Aorta (tissue), 5 donors: ENCODE measurements at regions of chr3 and their contacts with region 1.

Region 1: DNA sequence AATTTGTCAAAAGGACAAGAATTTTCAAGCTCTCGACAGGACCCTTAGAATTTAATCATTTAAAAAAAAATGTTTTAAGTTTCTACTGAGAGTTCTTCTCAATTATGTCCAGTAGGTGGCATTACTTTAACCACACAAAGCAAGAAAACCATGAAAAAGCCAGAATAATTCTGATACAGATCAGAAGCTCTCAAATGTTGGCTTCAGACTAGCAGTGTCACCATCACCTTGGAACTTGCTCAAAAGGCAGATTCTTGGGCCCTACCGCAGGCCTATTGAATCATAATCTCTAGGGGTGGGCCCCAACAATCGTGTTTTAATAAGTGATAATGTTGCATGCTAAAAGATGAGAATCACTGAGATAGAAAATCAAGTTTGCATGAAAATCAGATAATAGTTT is 99.5 kb upstream of the KCNMB2 start:
- DNase-seq: no peak
- ATAC-seq: no peak
- H3K4me3 ChIP-seq: no peak overlapping the region
- H3K27ac ChIP-seq: no peak overlapping the region
- H3K4me1 ChIP-seq: no peaks in the 10 kb centered on the region
- H3K27me3 ChIP-seq: no peaks in the 10 kb centered on the region

Region 2: GRCh38 chr3:178352326-178353005 is 84.3 kb before region 1 on chr3:
- intact Hi-C with region 1: no loop called
- DNase-seq: no peak
- ATAC-seq: peak; percentile 19
- H3K4me3 ChIP-seq: no peak overlapping the region
- H3K27ac ChIP-seq: no peak overlapping the region
- H3K4me1 ChIP-seq: no peaks in the 10 kb centered on the region
- H3K27me3 ChIP-seq: no peaks in the 10 kb centered on the region

Region 3: GRCh38 chr3:178947738-178948137 is 511.0 kb after region 1 on chr3:
- intact Hi-C with region 1: loop called in 1 of 2 experiments (anchors 5 kb)
- DNase-seq: no peak
- ATAC-seq: no peak
- H3K4me3 ChIP-seq: no peak overlapping the region
- H3K27ac ChIP-seq: no peak overlapping the region
- H3K4me1 ChIP-seq: no peaks in the 10 kb centered on the region
- H3K27me3 ChIP-seq: no peaks in the 10 kb centered on the region

Region 4: DNA sequence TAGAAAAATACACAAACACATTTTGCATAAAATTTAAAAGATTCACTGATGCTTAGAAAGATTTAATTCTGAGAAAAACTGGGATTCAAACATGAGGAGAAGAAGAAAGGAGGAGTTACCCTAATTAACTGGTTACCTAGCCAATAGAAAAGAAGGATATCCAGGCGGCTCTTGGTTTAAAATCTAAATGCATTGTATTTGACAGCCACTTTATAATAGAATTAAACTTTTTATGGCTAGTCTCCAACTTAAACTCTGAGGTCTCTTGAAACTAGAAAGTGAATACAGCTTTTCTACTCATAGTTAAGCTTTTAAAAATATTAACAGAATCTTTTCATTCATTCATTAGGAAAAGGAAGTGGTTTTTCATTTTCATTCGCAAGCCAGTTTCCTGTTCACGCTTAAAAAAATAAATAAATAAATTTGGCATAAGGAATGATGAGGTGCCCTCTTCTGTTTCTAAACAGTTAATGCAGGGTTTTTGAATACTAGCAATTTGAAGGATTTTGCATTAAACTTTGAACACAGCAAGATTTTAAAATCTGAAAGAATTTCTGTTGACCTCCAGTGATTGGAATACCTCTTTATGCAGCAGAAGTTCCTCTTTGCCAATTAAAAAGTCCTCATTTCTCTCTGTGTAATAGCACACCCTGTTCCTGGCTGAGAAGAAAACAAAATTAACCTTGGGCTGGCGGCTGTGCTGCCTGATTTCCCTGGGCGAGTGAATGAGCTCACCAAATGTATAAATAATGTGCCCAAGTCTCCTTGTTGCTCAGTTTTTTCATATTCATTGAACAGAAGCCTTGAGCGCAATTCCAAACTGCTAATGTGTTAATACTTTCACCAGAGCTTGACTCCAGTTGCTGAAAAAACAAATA is 529.8 kb after region 1 on chr3:
- intact Hi-C with region 1: loop called (anchors 2 kb)
- DNase-seq: no peak
- ATAC-seq: no peak
- H3K4me3 ChIP-seq: peak overlapping the region in 1 of 2 donors; percentile 14
- H3K27ac ChIP-seq: no peak overlapping the region
- H3K4me1 ChIP-seq: no peaks in the 10 kb centered on the region
- H3K27me3 ChIP-seq: no peaks in the 10 kb centered on the region